PC-9 (cell line): ENCODE measurements at regions of chr5 and their contacts with region 1.

Region 1: DNA sequence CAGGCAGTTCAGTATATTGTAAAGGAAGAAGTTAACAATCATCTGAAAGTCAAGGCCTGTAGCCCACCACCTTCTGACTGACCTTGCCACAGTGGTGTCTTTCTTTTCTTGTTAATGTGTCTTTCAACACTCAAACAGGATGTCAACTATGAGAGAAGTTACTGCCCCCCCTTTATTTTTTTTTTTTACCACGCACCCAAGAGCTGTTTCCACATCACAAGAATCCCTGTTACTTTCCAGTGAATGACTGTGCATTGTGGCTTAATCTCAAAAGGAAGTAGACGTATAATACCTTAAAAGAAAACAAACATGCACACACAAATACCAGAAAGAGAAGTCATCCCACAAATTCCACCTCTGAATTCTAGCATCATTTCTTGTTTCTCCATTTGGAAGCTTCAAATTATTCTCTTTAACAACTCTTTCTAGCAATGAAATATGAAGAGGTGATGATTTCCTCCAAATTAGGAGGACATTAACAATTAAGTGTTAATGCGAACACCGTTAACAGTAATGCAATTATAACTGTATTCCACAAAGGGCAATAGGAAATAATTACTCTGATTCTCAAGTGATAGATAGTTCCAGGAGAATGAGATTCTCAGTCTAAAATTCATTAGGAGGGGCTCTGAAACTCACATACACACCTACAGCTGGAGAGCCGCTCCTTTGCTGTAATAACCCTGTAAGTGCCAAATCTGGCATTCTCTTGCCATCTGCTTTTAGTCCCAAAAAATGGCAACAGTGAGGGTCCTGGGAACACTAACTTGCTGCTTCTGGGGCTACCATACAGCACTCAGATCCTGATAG is 201.0 kb downstream of the EFNA5 start:
- DNase-seq: peak; percentile 46 to 98
- H3K4me3 ChIP-seq: peak overlapping the region; percentile 22; the same call in 1 of the 2 replicates
- H3K27ac ChIP-seq: peak overlapping the region; percentile 96
- H3K4me1 ChIP-seq: peaks cover 94% of the 10 kb centered on the region
- H3K27me3 ChIP-seq: no peaks in the 10 kb centered on the region
- CTCF ChIP-seq: no peak

Region 2: DNA sequence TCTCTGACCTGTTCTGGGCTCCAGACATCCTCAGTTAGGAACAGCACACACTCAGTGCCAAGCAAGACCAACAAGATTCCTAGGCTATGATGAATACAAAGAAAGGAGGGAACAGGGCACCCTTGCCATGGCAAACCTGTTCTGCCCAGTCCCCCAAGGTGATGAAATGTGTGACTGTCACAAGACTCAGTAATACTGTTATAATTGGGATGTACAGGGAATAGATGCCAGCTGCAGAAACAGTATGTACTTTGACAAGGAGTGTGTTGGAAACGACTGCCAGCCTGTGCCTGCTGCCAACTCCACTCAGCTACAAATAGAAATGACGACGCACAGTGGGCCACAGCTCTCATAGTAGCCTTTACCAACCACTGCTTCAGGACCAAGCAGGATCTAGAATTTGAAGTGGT is 252.0 kb before region 1 on chr5:
- CTCF ChIA-PET with region 1: no interaction called
- POLR2A ChIA-PET with region 1: no interaction called
- intact Hi-C with region 1: loop called (anchors 1 kb)
- DNase-seq: peak; percentile 76 to 96
- H3K4me3 ChIP-seq: peak overlapping the region; percentile 45; the same call in 1 of the 2 replicates
- H3K27ac ChIP-seq: peak overlapping the region; percentile 96
- H3K4me1 ChIP-seq: peaks cover 53% of the 10 kb centered on the region
- H3K27me3 ChIP-seq: no peaks in the 10 kb centered on the region
- CTCF ChIP-seq: no peak

Region 3: GRCh38 chr5:107425541-107426256 is 44.0 kb before region 1 on chr5:
- CTCF ChIA-PET with region 1: no interaction called
- POLR2A ChIA-PET with region 1: interaction called, 3 read pairs
- intact Hi-C with region 1: loop called (anchors 2 kb)
- DNase-seq: peak; percentile 43 to 89
- H3K4me3 ChIP-seq: no peak overlapping the region; the same call in 1 of the 2 replicates
- H3K27ac ChIP-seq: peak overlapping the region; percentile 85
- H3K4me1 ChIP-seq: peaks cover 68% of the 10 kb centered on the region
- H3K27me3 ChIP-seq: no peaks in the 10 kb centered on the region
- CTCF ChIP-seq: no peak

Region 4: GRCh38 chr5:107542428-107542827 is 72.7 kb after region 1 on chr5:
- CTCF ChIA-PET with region 1: no interaction called
- POLR2A ChIA-PET with region 1: interaction called, 7 read pairs
- intact Hi-C with region 1: loop called (anchors 1 kb)
- DNase-seq: peak; percentile 88 to 97
- H3K4me3 ChIP-seq: peak overlapping the region; percentile 26; the same call in 1 of the 2 replicates
- H3K27ac ChIP-seq: peak overlapping the region; percentile 93
- H3K4me1 ChIP-seq: peaks cover 59% of the 10 kb centered on the region
- H3K27me3 ChIP-seq: no peaks in the 10 kb centered on the region
- CTCF ChIP-seq: no peak